ENCODE measurements at regions of chr14 and their contacts with region 1.

Region 1: DNA sequence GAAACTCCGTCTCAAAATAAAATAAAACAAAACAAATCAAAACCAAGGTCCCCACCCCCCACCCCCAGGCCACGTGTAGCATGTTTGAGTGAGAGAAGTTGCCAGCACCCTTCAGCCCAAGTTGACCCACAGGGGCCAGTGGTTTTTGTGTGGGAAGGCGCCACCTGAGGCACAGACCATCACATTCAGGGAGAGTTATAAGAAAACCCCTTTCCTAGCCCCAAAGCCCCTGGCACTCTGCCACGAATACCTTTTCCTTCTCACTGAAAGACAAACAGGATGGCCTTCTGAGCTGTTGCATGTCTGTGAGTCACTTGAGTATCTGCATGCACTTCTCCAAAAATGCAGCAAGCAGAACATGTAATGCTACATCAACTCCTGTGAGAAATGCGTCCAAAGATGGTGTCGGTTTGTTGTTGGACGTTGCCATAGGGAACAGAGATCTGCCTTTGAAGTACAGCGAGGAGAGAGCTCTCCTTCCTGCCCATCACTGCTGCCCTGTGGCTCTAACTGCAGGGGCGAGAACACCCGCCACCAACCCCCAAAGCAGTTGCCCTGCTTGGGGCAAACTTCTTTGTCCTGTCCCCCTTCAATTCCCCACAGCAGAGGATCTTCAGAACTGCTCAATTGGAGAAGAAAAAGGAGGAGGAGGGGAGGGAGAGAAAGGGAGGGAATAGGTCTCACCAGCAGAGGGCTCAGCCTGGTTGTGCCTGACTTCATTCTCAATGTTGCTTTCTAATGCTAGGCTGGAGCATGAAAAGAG is 2.7 kb upstream of the TRAF3 start:
- DNase-seq: peak; percentile 57
- H3K4me3 ChIP-seq: no peak overlapping the region
- H3K27ac ChIP-seq: no peak overlapping the region
- H3K4me1 ChIP-seq: no peaks in the 10 kb centered on the region
- H3K27me3 ChIP-seq: no peaks in the 10 kb centered on the region
- CTCF ChIP-seq: peak; percentile 33 to 74 (median 70)
- POLR2A ChIP-seq: no peak

Region 2: GRCh38 chr14:102840756-102841528 is 66.4 kb after region 1 on chr14:
- intact Hi-C with region 1: no loop called
- DNase-seq: no peak
- H3K4me3 ChIP-seq: no peak overlapping the region
- H3K27ac ChIP-seq: no peak overlapping the region
- H3K4me1 ChIP-seq: no peaks in the 10 kb centered on the region
- H3K27me3 ChIP-seq: no peaks in the 10 kb centered on the region
- CTCF ChIP-seq: no peak
- POLR2A ChIP-seq: no peak

Region 3: DNA sequence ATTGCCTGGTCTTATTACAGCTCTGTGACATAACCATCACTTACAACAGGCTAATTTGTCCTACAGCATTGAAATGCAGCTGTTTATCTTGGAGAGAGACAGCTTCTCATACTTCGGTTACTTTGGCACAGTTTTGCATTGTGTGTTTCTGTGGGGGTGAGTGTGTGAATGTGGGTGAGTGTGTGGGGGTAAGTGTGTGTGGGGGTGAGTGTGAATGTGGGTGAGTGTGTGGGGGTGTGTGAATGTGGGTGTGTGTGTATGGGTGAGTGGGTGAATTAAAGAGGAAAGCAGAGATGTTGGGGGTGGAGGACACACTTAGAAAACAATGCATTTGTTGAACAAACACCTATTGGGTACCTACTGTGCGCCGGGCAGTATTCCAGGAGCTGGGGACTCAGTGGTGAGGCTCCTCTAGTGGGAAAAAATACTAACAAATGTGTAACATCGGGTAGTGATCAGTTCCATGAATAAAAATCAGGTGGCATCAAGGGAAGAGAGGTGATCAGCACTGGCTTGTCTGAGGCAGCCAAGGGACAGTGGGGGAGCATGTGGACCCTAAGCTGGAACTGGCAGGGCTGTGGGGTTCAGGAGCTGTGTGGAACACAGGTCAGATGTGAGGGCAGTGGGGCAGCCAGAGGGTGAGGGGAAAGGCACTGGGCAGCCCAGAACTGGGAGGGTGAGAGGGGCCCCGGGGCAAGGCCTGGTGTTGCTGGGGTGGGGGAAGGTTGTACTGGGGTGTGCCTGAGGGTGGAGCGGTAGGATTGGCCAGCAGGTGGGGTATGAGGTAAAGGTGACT is 103.8 kb after region 1 on chr14:
- intact Hi-C with region 1: no loop called
- DNase-seq: no peak
- H3K4me3 ChIP-seq: no peak overlapping the region
- H3K27ac ChIP-seq: no peak overlapping the region
- H3K4me1 ChIP-seq: no peaks in the 10 kb centered on the region
- H3K27me3 ChIP-seq: no peaks in the 10 kb centered on the region
- CTCF ChIP-seq: no peak
- POLR2A ChIP-seq: no peak

Region 4: GRCh38 chr14:102917469-102918211 is 143.1 kb after region 1 on chr14:
- intact Hi-C with region 1: loop called (anchors 5 kb)
- DNase-seq: peak; percentile 31
- H3K4me3 ChIP-seq: no peak overlapping the region
- H3K27ac ChIP-seq: no peak overlapping the region
- H3K4me1 ChIP-seq: no peaks in the 10 kb centered on the region
- H3K27me3 ChIP-seq: no peaks in the 10 kb centered on the region
- CTCF ChIP-seq: peak; percentile 23 to 59 (median 54)
- POLR2A ChIP-seq: no peak

Region 5: GRCh38 chr14:103169954-103170353 is 395.4 kb after region 1 on chr14:
- intact Hi-C with region 1: no loop called
- DNase-seq: no peak
- H3K4me3 ChIP-seq: no peak overlapping the region
- H3K27ac ChIP-seq: no peak overlapping the region
- H3K4me1 ChIP-seq: no peaks in the 10 kb centered on the region
- H3K27me3 ChIP-seq: no peaks in the 10 kb centered on the region
- CTCF ChIP-seq: no peak
- POLR2A ChIP-seq: no peak